Natural killer cell (primary cell): ENCODE measurements at regions of chr19 and their contacts with region 1.

Region 1: DNA sequence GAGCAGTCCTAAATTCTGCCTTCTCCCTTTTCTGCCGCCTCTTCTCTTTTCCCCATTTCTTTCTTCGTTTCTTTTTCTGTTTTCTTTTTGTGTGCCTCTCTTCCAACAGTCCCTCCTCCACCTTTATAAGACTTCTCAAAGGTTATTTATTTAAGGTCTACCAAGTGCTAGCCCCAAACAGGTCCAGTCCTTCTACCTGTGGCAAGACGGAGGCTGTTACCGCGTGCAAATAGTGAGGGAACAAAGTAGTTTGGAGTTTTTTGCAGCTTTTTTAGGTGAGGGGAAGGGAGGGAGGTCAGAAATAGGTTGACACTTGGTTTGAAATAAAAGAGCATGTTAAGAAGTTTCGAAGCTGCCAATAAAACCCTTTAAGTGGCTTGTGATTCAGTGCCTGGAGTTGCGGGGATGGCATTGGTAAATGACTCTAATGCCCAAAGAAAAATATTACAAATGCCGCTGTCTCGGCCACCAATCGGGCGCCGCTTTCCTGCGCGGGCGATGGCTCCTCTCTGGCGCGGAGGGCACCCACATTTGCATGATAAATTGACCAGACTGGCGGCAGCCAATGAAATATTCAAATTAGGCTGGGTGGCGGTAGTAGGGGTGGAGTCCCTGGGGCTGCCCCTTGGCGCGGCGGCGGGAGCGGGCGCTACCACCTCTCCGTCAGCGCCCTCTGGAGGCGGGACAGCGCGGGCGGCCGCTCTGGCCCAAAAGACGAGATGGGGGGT is 7.5 kb upstream of the TSHZ3 start:
- DNase-seq: peak; percentile 59 to 73
- ATAC-seq: peak; percentile 80 to 94 (median 87)
- H3K4me3 ChIP-seq: no peak overlapping the region
- H3K4me3 Mint-ChIP-seq: peak overlapping the region; percentile 33
- H3K27ac ChIP-seq: no peak overlapping the region
- H3K27ac Mint-ChIP-seq: no peak overlapping the region
- H3K4me1 ChIP-seq: peaks cover 51% of the 10 kb centered on the region
- H3K4me1 Mint-ChIP-seq: peaks cover 43 to 51% of the 10 kb centered on the region in 2 donors
- H3K27me3 ChIP-seq: peaks cover 66% of the 10 kb centered on the region
- H3K27me3 Mint-ChIP-seq: peaks cover 84 to 87% of the 10 kb centered on the region in 2 donors
- CTCF ChIP-seq: peak; percentile 71

Region 2: GRCh38 chr19:30784850-30785457 is 571.8 kb before region 1 on chr19:
- intact Hi-C with region 1: loop called (anchors 2 kb)
- DNase-seq: peak; percentile 61 to 71
- ATAC-seq: peak in 2 of 3 donors; percentile 44 to 67
- H3K4me3 ChIP-seq: no peak overlapping the region
- H3K4me3 Mint-ChIP-seq: no peak overlapping the region
- H3K27ac ChIP-seq: no peak overlapping the region
- H3K27ac Mint-ChIP-seq: no peak overlapping the region
- H3K4me1 ChIP-seq: no peaks in the 10 kb centered on the region
- H3K4me1 Mint-ChIP-seq: no peaks in the 10 kb centered on the region
- H3K27me3 ChIP-seq: no peaks in the 10 kb centered on the region
- H3K27me3 Mint-ChIP-seq: peaks cover 2 to 7% of the 10 kb centered on the region in 2 donors
- CTCF ChIP-seq: peak; percentile 68

Region 3: GRCh38 chr19:31041461-31041860 is 315.3 kb before region 1 on chr19:
- intact Hi-C with region 1: no loop called
- DNase-seq: no peak
- ATAC-seq: no peak
- H3K4me3 ChIP-seq: no peak overlapping the region
- H3K4me3 Mint-ChIP-seq: no peak overlapping the region
- H3K27ac ChIP-seq: no peak overlapping the region
- H3K27ac Mint-ChIP-seq: no peak overlapping the region
- H3K4me1 ChIP-seq: no peaks in the 10 kb centered on the region
- H3K4me1 Mint-ChIP-seq: no peaks in the 10 kb centered on the region
- H3K27me3 ChIP-seq: no peaks in the 10 kb centered on the region
- H3K27me3 Mint-ChIP-seq: peaks cover 0 to 23% of the 10 kb centered on the region in 2 donors
- CTCF ChIP-seq: no peak

Region 4: DNA sequence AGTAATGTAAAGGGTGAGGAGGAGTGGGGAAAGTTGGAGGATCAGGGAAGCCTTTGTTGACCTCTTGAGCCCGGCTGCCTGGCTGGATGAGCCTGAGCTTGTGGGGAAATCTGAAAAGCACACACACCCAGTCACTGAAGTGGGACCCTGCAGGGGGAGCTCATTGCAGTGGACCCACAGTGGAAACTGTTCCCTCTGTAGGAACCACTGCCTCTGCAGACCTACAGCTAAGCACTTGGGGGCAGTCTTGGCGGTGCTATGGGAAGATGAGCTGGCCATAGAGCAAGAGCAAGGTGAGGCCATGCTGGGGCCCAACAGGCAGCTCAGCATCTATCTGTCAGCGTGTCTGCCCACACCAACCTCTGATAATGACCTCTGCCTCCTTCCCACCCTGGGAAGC is 302.3 kb before region 1 on chr19:
- intact Hi-C with region 1: loop called (anchors 2 kb)
- DNase-seq: peak in 1 of 2 donors; percentile 56
- ATAC-seq: peak in 2 of 3 donors; percentile 53 to 67
- H3K4me3 ChIP-seq: no peak overlapping the region
- H3K4me3 Mint-ChIP-seq: no peak overlapping the region
- H3K27ac ChIP-seq: no peak overlapping the region
- H3K27ac Mint-ChIP-seq: no peak overlapping the region
- H3K4me1 ChIP-seq: no peaks in the 10 kb centered on the region
- H3K4me1 Mint-ChIP-seq: no peaks in the 10 kb centered on the region
- H3K27me3 ChIP-seq: no peaks in the 10 kb centered on the region
- H3K27me3 Mint-ChIP-seq: peaks cover 19 to 21% of the 10 kb centered on the region in 2 donors
- CTCF ChIP-seq: peak; percentile 35

Region 5: GRCh38 chr19:31285744-31286143 is 71.0 kb before region 1 on chr19:
- intact Hi-C with region 1: no loop called
- DNase-seq: no peak
- ATAC-seq: no peak
- H3K4me3 ChIP-seq: no peak overlapping the region
- H3K4me3 Mint-ChIP-seq: no peak overlapping the region
- H3K27ac ChIP-seq: no peak overlapping the region
- H3K27ac Mint-ChIP-seq: no peak overlapping the region
- H3K4me1 ChIP-seq: no peaks in the 10 kb centered on the region
- H3K4me1 Mint-ChIP-seq: peaks cover 0 to 26% of the 10 kb centered on the region in 2 donors
- H3K27me3 ChIP-seq: no peaks in the 10 kb centered on the region
- H3K27me3 Mint-ChIP-seq: no peaks in the 10 kb centered on the region
- CTCF ChIP-seq: no peak

Region 6: DNA sequence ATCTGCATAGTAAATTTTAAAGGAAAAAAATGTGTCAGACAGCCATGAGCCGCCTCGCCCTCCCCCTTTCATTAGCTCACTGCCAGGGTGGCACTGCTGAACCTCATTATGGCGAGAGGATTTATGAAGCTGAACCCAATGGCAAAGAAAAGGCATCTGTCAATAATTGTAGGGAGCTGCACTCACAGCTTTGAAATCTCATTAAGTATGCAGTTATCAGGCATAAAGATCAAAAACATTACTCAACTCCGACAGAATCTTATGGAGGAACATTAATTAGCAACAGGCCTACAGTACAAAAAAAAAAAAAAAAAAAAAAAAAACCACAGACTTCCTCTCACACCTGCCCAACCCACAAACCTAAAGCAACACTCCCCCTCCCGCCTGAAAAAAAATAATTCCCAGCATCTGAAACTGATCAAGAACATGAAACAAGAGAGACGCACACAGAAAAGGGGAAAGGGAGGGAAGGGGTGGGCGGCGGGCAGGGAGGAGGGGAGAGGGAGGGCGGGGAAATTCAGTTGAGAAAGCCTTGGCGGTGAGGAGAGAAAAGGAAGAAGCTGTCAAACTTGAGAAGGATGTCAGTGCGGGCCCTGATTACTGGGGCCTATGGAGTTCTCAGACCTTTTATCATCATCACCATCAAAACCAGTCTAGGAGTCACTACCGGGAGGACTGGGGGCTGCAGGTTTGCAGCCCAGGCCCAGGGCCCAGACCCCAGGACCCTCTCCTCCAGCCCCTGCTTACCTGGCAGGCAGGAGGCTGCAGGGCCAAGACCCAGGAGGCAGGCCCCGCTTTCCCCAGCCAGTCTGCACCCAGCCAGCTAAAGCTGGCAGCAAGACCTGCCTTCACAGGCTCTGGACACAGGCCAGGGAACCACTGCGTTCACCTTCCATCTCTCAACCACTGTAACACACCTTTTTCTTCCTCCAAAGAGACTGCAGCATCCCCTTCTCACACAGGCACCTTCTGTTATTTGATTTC is 16.4 kb before region 1 on chr19:
- intact Hi-C with region 1: loop called (anchors 1 kb)
- DNase-seq: peak in 1 of 2 donors; percentile 77
- ATAC-seq: peak; percentile 68 to 77 (median 70)
- H3K4me3 ChIP-seq: no peak overlapping the region
- H3K4me3 Mint-ChIP-seq: peak overlapping the region; percentile 82
- H3K27ac ChIP-seq: no peak overlapping the region
- H3K27ac Mint-ChIP-seq: peak overlapping the region; percentile 80 to 89
- H3K4me1 ChIP-seq: peaks cover 31% of the 10 kb centered on the region
- H3K4me1 Mint-ChIP-seq: peaks cover 42 to 44% of the 10 kb centered on the region in 2 donors
- H3K27me3 ChIP-seq: peaks cover 17% of the 10 kb centered on the region
- H3K27me3 Mint-ChIP-seq: peaks cover 31 to 53% of the 10 kb centered on the region in 2 donors
- CTCF ChIP-seq: no peak